Common myeloid progenitor, CD34-positive (primary cell): ENCODE measurements at regions of chr6 and their contacts with region 1.

Region 1: GRCh38 chr6:27825025-27825793 is 87.0 kb downstream of the OR2B2 start:
- DNase-seq: no peak
- H3K4me3 ChIP-seq: peak overlapping the region; percentile 47 to 95 (median 78)
- H3K27ac ChIP-seq: peak overlapping the region; percentile 37 to 87
- H3K4me1 ChIP-seq: peaks cover 10 to 28% (median 23%) of the 10 kb centered on the region in 4 experiments
- H3K27me3 ChIP-seq: no peaks in the 10 kb centered on the region

Region 2: GRCh38 chr6:27761391-27761790 is 63.8 kb before region 1 on chr6:
- CTCF ChIA-PET with region 1: no interaction called
- POLR2A ChIA-PET with region 1: no interaction called
- DNase-seq: peak in 1 of 3 donors; percentile 25
- H3K4me3 ChIP-seq: no peak overlapping the region
- H3K27ac ChIP-seq: no peak overlapping the region
- H3K4me1 ChIP-seq: peaks cover 0 to 19% (median 16%) of the 10 kb centered on the region in 4 experiments
- H3K27me3 ChIP-seq: no peaks in the 10 kb centered on the region

Region 3: DNA sequence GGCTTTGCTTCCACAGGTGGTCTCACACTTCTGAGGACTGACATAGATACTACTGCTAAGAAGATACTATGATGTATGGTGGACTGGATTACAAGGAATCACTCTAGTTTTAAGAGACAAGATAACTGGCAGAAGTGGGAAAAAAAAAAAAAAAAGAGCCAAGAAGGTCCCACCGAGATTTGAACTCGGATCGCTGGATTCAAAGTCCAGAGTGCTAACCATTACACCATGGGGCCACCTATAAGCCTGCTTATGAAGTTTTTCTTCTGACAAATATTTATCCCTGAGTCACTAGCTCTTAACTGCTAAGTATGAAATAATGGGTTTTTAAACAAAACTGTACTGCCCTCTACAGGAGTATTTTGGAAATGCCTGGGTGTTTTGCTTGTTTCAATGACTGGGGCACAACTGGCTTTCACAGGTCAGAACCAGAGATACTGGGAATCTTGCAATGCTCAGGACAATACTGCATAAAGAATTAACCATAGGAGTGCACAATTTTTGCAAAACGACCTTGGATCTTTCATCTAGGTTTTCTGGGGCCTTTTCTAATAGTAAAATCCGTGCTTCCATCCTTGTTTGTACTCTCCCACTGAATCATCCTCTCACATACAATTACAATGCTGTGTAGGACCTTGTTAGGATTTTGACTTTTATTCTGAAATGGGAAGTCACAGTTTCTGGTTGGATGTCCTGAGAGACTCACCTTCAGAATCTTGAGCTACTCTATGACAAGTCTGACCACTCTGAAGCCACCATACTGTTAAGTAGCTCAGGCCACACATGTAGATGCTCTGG is 29.3 kb before region 1 on chr6:
- CTCF ChIA-PET with region 1: no interaction called
- POLR2A ChIA-PET with region 1: no interaction called
- DNase-seq: peak; percentile 90 to 95 (median 92)
- H3K4me3 ChIP-seq: no peak overlapping the region
- H3K27ac ChIP-seq: no peak overlapping the region
- H3K4me1 ChIP-seq: peaks cover 13 to 22% (median 20%) of the 10 kb centered on the region in 4 experiments
- H3K27me3 ChIP-seq: peaks cover 0 to 2% (median 0%) of the 10 kb centered on the region in 5 experiments

Region 4: GRCh38 chr6:27809939-27810767 is 15.1 kb before region 1 on chr6:
- CTCF ChIA-PET with region 1: interaction called, 6 read pairs
- POLR2A ChIA-PET with region 1: interaction called, 10 read pairs
- DNase-seq: peak; percentile 96 to 98 (median 98)
- H3K4me3 ChIP-seq: peak overlapping the region; percentile 73 to 94 (median 85)
- H3K27ac ChIP-seq: peak overlapping the region; percentile 74 to 89
- H3K4me1 ChIP-seq: peaks cover 27 to 67% (median 48%) of the 10 kb centered on the region in 4 experiments
- H3K27me3 ChIP-seq: no peaks in the 10 kb centered on the region

Region 5: DNA sequence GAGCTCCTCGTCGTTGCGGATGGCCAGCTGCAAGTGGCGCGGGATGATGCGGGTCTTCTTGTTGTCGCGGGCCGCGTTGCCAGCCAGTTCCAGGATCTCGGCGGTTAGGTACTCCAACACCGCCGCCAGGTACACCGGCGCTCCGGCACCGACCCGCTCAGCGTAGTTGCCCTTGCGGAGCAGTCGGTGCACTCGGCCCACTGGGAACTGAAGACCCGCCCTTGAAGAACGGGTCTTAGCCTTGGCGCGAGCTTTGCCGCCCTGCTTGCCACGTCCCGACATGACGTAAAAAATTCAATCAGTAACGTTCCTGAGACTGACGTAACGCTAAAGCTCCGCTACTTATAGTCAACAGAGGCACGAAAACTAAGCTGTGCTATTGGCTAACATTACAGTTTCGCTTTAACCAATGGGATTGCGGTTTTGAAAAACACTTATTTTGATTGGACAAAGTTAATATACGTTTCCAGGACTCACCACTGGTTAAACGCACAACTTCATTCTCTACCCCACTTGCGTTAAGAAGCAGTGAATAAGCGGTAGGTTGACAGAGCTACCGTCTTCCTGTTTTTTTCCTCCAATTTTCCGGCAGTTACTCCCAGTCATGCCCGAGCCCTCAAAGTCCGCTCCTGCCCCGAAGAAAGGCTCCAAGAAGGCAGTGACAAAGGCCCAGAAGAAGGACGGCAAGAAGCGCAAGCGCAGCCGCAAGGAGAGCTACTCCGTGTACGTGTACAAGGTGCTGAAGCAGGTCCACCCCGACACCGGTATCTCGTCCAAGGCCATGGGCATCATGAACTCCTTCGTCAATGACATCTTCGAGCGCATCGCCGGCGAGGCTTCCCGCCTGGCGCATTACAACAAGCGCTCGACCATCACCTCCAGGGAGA is 13.1 kb after region 1 on chr6:
- CTCF ChIA-PET with region 1: interaction called, 44 read pairs
- POLR2A ChIA-PET with region 1: interaction called, 8 read pairs
- DNase-seq: peak; percentile 99 to 100 (median 99)
- H3K4me3 ChIP-seq: peak overlapping the region; percentile 64 to 97 (median 90)
- H3K27ac ChIP-seq: peak overlapping the region; percentile 94 to 98
- H3K4me1 ChIP-seq: peaks cover 22 to 46% (median 35%) of the 10 kb centered on the region in 4 experiments
- H3K27me3 ChIP-seq: no peaks in the 10 kb centered on the region

Region 6: DNA sequence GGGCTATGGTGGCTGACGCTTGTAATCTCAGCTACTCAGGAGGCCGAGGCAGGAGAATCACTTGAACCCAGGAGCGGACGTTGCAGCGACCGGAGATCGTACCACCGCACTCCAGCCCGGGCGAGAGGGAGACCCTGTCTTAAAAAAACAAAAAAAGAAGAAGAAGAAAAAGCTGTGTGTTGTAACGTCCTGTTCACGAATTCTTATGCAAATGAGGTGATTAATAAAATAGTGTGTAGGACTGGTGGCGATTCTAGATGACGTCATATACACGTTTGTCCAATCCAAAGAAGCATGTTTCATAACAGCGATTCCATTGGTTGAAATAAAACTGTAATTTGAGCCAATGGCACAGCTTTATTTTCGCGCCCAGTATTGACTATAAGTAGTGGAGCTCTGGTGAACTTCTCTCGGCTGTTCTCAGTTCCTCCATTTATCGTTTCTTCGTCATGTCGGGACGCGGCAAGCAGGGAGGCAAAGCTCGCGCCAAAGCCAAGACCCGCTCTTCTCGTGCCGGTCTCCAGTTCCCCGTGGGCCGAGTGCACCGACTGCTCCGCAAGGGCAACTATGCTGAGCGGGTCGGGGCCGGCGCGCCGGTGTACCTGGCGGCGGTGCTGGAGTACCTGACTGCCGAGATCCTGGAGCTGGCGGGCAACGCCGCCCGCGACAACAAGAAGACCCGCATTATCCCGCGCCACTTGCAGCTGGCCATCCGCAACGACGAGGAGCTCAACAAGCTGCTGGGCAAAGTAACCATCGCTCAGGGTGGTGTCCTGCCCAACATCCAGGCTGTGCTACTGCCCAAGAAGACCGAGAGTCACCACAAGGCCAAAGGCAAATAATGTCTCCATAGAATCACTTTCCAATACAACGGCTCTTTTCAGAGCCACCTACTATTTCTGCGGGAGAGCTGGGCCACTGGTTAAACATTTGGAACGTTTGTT is 40.0 kb after region 1 on chr6:
- CTCF ChIA-PET with region 1: interaction called, 12 read pairs
- POLR2A ChIA-PET with region 1: interaction called, 21 read pairs
- DNase-seq: peak; percentile 99
- H3K4me3 ChIP-seq: peak overlapping the region; percentile 72 to 93 (median 82)
- H3K27ac ChIP-seq: peak overlapping the region; percentile 65 to 80
- H3K4me1 ChIP-seq: peaks cover 16 to 55% (median 35%) of the 10 kb centered on the region in 4 experiments
- H3K27me3 ChIP-seq: no peaks in the 10 kb centered on the region

Region 7: DNA sequence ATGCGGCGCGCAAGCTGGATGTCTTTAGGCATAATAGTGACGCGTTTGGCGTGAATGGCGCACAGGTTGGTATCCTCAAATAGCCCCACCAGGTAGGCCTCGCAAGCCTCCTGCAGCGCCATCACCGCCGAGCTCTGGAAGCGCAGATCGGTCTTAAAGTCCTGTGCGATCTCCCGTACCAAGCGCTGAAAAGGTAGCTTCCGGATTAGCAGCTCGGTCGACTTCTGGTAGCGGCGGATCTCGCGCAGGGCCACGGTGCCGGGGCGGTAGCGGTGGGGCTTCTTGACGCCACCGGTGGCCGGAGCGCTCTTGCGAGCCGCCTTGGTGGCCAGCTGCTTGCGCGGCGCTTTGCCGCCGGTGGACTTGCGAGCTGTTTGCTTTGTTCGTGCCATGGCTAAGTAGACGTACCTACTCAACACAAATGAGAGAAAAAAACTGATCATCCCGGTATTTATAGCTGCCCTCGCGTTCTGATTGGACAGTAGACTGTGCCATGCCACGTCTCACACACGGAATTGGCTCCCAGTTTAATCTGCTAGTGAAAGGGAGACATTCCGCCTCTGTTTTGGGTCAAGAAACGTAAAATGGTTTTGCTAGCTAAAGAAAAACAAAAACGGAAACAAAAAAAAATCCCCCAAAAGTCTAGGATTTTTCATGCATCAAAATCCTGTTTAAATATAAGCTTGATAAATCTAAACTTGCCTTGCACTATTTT is 46.9 kb after region 1 on chr6:
- CTCF ChIA-PET with region 1: interaction called, 12 read pairs
- POLR2A ChIA-PET with region 1: interaction called, 21 read pairs
- DNase-seq: peak; percentile 97 to 98 (median 98)
- H3K4me3 ChIP-seq: peak overlapping the region; percentile 40 to 99 (median 85)
- H3K27ac ChIP-seq: peak overlapping the region; percentile 82 to 92
- H3K4me1 ChIP-seq: peaks cover 9 to 56% (median 39%) of the 10 kb centered on the region in 4 experiments
- H3K27me3 ChIP-seq: no peaks in the 10 kb centered on the region

Region 8: GRCh38 chr6:27948237-27948636 is 123.0 kb after region 1 on chr6:
- CTCF ChIA-PET with region 1: no interaction called
- POLR2A ChIA-PET with region 1: no interaction called
- DNase-seq: no peak
- H3K4me3 ChIP-seq: no peak overlapping the region
- H3K27ac ChIP-seq: no peak overlapping the region
- H3K4me1 ChIP-seq: no peaks in the 10 kb centered on the region
- H3K27me3 ChIP-seq: peaks cover 0 to 8% (median 0%) of the 10 kb centered on the region in 5 experiments